Posterior cingulate gyrus (tissue), 11 donors: ENCODE measurements at regions of chr10 and their contacts with region 1.

Region 1: GRCh38 chr10:123132576-123133477 is 2.9 kb upstream of the HMX3 start:
- DNase-seq: peak; percentile 56 to 96 (median 86)

Region 2: DNA sequence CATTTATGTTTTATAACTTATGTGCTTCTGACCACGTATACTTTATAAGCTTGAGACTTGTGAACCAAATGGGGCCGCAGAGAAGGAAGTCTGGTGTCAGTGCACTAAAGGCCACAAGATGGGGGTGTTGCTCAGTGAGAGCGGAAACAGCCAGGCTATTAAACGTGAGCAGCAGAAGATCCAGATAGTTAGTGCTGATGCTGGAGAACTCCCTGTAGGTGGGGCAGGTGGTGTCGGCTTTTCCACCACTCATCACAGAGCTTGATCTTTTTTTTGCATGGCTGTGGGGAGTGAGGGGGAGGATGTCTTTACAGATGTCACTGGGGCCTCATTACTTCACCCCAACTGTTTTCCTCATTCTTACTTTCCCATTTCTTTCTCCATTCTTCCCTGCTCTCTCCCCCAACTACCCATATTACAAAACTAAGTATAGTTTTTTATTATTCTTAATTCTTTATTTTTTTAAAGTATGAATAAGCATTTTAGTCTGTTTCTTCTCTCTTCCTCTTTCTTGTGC is 89.4 kb before region 1 on chr10:
- intact Hi-C with region 1: loop called (anchors 2 kb)
- DNase-seq: peak in 8 of 10 donors; percentile 35 to 95 (median 64)

Region 3: GRCh38 chr10:123301077-123301857 is 168.4 kb after region 1 on chr10:
- intact Hi-C with region 1: loop called (anchors 10 kb)
- DNase-seq: peak; percentile 61 to 97 (median 84)

Region 4: DNA sequence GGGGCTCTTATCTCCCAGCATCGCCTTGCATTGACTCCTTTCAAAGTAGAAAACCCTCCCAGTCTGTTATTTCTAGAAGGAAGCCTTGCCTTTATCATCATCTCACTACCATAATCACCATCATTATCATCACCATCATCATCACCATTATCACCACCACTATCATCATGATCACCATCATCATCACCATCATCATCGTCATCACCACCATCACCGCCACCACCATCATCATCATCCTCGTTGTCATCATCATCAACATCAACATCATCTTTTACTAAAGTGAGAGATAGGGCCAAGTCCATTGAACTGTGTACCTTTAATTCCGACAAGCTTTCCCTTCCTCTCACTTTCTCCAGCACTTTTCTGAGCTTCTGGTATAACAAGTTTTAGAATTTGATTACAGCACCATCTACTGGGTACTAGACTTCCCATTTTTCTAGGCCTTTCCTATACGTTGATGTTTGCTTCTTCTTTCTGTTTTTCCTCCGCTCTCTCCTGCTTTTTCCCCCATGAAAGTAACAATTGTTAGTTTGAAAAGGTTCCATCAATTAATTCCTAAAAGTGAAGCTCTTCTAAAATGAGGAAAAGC is 247.8 kb after region 1 on chr10:
- intact Hi-C with region 1: loop called (anchors 2 kb)
- DNase-seq: no peak

Region 5: DNA sequence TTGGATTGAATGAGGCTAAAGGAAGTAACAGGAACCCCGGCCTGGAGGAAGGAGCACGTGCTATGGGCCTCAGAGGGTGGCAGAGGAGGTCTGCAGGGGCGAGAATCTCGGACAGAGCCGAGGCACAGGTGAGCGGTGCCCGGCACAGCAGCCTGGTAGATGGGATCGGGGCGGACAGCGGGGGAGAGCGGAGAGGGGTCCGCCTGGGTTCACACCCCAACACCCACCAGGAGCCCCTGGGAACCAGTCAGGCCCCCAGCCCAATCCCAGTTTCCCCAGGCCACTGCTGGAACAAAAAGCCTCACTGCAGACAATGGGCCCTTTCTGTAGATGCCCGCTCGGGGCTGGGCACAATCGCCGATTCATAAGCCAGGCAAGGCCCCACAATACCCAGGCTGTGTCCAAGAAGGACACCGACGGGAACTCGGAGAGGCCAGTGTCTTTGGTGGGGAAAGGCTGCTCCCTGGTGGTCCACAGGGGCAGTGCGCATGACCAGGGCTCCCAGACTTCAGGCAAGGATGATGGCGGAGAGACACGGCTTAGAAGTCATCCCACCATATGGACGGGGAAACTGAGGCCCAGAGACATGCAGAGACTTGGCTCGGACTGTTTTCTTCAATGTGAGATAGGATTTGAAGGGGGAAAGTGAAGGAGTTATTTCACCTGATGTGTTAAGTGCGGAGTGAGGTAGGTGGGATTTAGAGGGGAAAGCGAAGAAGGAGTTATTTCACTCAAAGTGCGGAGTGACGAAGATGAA is 426.4 kb after region 1 on chr10:
- intact Hi-C with region 1: loop called (anchors 1 kb)
- DNase-seq: peak; percentile 80 to 98 (median 90)